Mammary epithelial cell (primary cell): ENCODE measurements at regions of chr6 and their contacts with region 1.

Region 1: GRCh38 chr6:166515072-166515810 is 71.2 kb downstream of the RAMACL start:
- DNase-seq: peak; percentile 80
- H3K4me3 ChIP-seq: no peak overlapping the region
- H3K27ac ChIP-seq: no peak overlapping the region
- H3K4me1 ChIP-seq: peaks cover 11% of the 10 kb centered on the region
- H3K27me3 ChIP-seq: no peaks in the 10 kb centered on the region
- CTCF ChIP-seq: peak; percentile 55 to 77

Region 2: GRCh38 chr6:166244353-166245045 is 270.7 kb before region 1 on chr6:
- CTCF ChIA-PET with region 1: no interaction called
- dilution Hi-C with region 1: no loop called
- in situ Hi-C with region 1: no loop called
- intact Hi-C with region 1: no loop called
- DNase-seq: no peak
- H3K4me3 ChIP-seq: no peak overlapping the region
- H3K27ac ChIP-seq: no peak overlapping the region
- H3K4me1 ChIP-seq: no peaks in the 10 kb centered on the region
- H3K27me3 ChIP-seq: no peaks in the 10 kb centered on the region
- CTCF ChIP-seq: no peak

Region 3: GRCh38 chr6:166556871-166557322 is 41.7 kb after region 1 on chr6:
- CTCF ChIA-PET with region 1: no interaction called
- dilution Hi-C with region 1: no loop called
- in situ Hi-C with region 1: no loop called
- intact Hi-C with region 1: loop called (anchors 2 kb)
- DNase-seq: peak; percentile 99
- H3K4me3 ChIP-seq: peak overlapping the region in 1 of 3 experiments; percentile 17
- H3K27ac ChIP-seq: peak overlapping the region; percentile 83
- H3K4me1 ChIP-seq: peaks cover 57% of the 10 kb centered on the region
- H3K27me3 ChIP-seq: no peaks in the 10 kb centered on the region
- CTCF ChIP-seq: peak in 1 of 2 donors; percentile 2

Region 4: DNA sequence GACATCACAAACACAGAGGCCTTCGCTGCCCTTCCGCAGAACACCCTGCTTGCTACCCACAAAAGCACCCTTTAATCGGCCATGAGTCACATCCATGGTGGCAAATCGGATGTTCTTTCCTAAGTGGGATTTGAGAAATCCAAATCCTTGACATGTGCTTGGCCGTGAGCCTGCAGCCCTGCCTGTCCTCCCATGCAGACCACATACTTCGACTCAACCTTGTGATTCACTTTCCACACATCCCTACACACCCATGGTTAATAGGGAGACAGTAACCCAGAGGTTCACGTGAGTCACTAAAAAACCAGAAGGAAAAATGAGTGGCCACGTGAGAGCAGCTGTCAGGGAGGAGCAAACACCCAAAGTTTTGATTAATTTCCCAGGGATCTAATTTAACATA is 51.9 kb after region 1 on chr6:
- CTCF ChIA-PET with region 1: no interaction called
- dilution Hi-C with region 1: no loop called
- in situ Hi-C with region 1: no loop called
- intact Hi-C with region 1: loop called (anchors 2 kb)
- DNase-seq: peak; percentile 98
- H3K4me3 ChIP-seq: no peak overlapping the region
- H3K27ac ChIP-seq: peak overlapping the region; percentile 69
- H3K4me1 ChIP-seq: peaks cover 28% of the 10 kb centered on the region
- H3K27me3 ChIP-seq: no peaks in the 10 kb centered on the region
- CTCF ChIP-seq: no peak

Region 5: DNA sequence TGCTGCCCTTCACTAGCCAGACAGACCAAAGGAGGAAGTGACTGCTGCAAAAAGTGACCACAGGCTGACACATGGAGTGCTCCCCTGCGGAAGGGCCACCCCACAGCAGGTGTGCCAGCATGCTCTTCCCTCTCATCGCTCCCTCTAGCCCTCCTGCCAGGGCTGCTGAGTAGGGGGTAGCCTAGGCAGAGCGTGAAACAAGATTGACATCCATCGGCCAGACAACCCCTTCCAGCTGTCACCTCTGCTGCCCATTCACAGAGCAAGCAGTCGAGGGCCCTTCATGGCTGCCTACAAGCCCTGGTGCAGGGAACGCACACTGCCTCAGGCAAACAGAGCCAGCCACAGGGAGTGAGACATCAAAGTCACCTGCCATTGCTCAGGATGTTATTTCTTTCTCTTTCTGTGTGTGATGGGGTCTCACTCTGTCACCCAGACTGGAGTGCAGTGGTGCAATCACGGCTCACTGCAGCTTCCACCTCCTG is 213.8 kb after region 1 on chr6:
- CTCF ChIA-PET with region 1: no interaction called
- dilution Hi-C with region 1: no loop called
- in situ Hi-C with region 1: no loop called
- intact Hi-C with region 1: loop called (anchors 10 kb)
- DNase-seq: no peak
- H3K4me3 ChIP-seq: no peak overlapping the region
- H3K27ac ChIP-seq: no peak overlapping the region
- H3K4me1 ChIP-seq: no peaks in the 10 kb centered on the region
- H3K27me3 ChIP-seq: no peaks in the 10 kb centered on the region
- CTCF ChIP-seq: no peak

Region 6: GRCh38 chr6:166757232-166758135 is 242.2 kb after region 1 on chr6:
- CTCF ChIA-PET with region 1: no interaction called
- dilution Hi-C with region 1: no loop called
- in situ Hi-C with region 1: no loop called
- intact Hi-C with region 1: loop called (anchors 5 kb)
- DNase-seq: peak; percentile 58
- H3K4me3 ChIP-seq: peak overlapping the region in 2 of 3 experiments; percentile 14 to 34
- H3K27ac ChIP-seq: no peak overlapping the region
- H3K4me1 ChIP-seq: peaks cover 6% of the 10 kb centered on the region
- H3K27me3 ChIP-seq: no peaks in the 10 kb centered on the region
- CTCF ChIP-seq: no peak